ENCODE measurements at regions of chr19 and their contacts with region 1.

Region 1: DNA sequence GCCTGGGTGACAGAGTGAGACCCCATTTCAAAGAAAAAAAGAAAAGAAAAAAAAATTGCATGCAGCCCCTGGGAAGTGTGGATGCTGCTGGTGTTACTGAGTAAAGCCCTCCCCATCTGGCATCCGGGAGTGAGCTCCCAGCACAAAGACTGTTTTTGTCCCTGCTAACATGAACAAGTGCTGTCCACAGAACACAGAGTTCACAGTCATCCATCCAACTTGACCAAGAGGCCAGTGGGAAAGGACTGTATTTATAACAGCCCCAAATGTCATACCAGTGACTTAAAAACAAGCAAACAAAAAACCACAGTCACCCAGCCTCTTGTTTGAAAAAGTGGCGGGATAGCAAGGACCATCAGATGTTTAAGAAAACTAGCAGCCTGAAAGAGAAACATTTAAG is 10.8 kb downstream of the FBXO17 start:
- DNase-seq: no peak
- H3K4me3 ChIP-seq: no peak overlapping the region
- H3K27ac ChIP-seq: no peak overlapping the region
- H3K4me1 ChIP-seq: no peaks in the 10 kb centered on the region
- H3K27me3 ChIP-seq: no peaks in the 10 kb centered on the region
- CTCF ChIP-seq: no peak

Region 2: DNA sequence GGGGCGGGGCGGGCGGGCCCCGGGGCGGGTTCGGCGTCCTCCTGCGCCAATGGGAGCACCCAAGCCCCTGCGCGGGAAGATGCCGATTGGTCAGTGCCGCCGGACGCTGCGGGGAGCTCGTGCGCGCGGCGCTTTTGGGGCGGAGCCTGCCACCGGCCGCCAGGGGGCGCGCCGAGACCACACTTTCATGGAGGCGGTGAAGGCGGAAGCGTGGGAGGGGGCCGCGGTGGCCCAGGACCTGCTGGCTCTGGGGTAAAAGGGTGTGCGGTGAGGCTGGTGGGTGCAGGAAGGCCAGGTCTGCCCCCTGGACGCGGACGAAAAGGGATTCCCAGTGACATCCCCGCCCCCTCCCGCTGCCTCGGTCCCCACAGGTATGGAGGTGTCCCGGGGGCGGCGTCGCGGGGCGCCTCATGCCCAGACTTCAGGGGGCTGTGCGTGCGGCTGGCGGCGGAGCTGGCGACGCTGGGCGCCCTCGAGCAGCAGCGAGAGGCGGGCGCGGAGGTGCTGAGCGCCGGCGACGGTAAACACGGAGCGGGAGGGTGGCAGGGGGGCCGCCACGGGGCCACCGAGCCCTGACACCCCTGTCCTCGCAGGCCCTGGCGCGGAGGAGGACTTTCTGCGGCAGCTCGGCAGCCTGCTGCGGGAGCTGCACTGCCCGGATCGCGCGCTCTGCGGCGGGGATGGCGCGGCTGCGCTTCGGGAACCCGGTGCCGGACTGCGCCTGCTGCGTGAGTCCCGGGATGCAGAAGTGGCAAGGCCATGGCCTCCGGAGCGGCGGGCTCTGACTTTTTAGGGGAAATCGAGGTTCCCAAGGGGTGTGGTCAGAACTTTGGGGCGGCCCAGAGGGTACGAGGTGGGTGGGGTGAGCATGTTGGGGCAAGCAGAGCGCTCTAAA is 561.5 kb before region 1 on chr19 and contains the start of gene FAM98C:
- CTCF ChIA-PET with region 1: interaction called, 18 read pairs
- POLR2A ChIA-PET with region 1: no interaction called
- intact Hi-C with region 1: no loop called
- DNase-seq: peak; percentile 90 to 97
- H3K4me3 ChIP-seq: peak within 1 kb of the TSS; percentile 94
- H3K27ac ChIP-seq: no peak within 1 kb of the TSS
- H3K4me1 ChIP-seq: peaks cover 8% of the 10 kb centered on the region; the same call in 1 of the 2 replicates
- H3K27me3 ChIP-seq: no peaks in the 10 kb centered on the region
- CTCF ChIP-seq: peak; percentile 94
- total RNA-seq, gene FAM98C: 15.8 and 19.5 TPM in 2 replicates

Region 3: GRCh38 chr19:39052243-39052746 is 87.6 kb after region 1 on chr19:
- CTCF ChIA-PET with region 1: no interaction called
- POLR2A ChIA-PET with region 1: no interaction called
- intact Hi-C with region 1: loop called (anchors 1 kb)
- DNase-seq: peak; percentile 45 to 72
- H3K4me3 ChIP-seq: no peak overlapping the region
- H3K27ac ChIP-seq: no peak overlapping the region
- H3K4me1 ChIP-seq: peaks cover under 1% of the 10 kb centered on the region; the same call in 1 of the 2 replicates
- H3K27me3 ChIP-seq: no peaks in the 10 kb centered on the region
- CTCF ChIP-seq: peak; percentile 96

Region 4: GRCh38 chr19:39125554-39126311 is 161.0 kb after region 1 on chr19 and contains the start of gene PAK4:
- CTCF ChIA-PET with region 1: no interaction called
- POLR2A ChIA-PET with region 1: no interaction called
- intact Hi-C with region 1: loop called (anchors 1 kb)
- DNase-seq: peak; percentile 92 to 97
- H3K4me3 ChIP-seq: peak within 1 kb of the TSS; percentile 80
- H3K27ac ChIP-seq: peak within 1 kb of the TSS; percentile 27; the same call in 1 of the 2 replicates
- H3K4me1 ChIP-seq: peaks cover 9% of the 10 kb centered on the region
- H3K27me3 ChIP-seq: no peaks in the 10 kb centered on the region
- CTCF ChIP-seq: no peak
- total RNA-seq, gene PAK4: 77.8 and 90.2 TPM in 2 replicates

Region 5: DNA sequence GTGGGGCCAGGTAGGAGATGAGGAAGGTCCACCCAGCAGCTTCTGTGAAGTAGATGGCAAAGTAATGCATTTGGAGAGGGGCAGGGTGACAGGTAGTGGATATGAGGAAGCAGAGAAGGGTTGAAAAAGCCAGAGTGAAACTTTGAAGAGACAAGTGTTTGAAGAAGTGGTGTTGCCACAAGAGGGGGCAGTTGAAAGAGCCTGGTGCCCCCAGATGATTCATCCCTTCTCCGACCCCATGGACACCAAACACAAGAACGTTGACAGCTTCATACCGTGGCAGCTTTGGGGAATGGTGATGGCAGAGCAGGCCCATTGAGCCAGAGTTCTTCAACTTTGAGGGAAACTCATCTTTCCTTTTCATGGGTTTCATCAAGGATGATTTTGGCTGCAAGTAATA is 260.2 kb after region 1 on chr19:
- CTCF ChIA-PET with region 1: no interaction called
- POLR2A ChIA-PET with region 1: no interaction called
- intact Hi-C with region 1: no loop called
- DNase-seq: no peak
- H3K4me3 ChIP-seq: no peak overlapping the region
- H3K27ac ChIP-seq: no peak overlapping the region
- H3K4me1 ChIP-seq: no peaks in the 10 kb centered on the region
- H3K27me3 ChIP-seq: no peaks in the 10 kb centered on the region
- CTCF ChIP-seq: no peak

Region 6: DNA sequence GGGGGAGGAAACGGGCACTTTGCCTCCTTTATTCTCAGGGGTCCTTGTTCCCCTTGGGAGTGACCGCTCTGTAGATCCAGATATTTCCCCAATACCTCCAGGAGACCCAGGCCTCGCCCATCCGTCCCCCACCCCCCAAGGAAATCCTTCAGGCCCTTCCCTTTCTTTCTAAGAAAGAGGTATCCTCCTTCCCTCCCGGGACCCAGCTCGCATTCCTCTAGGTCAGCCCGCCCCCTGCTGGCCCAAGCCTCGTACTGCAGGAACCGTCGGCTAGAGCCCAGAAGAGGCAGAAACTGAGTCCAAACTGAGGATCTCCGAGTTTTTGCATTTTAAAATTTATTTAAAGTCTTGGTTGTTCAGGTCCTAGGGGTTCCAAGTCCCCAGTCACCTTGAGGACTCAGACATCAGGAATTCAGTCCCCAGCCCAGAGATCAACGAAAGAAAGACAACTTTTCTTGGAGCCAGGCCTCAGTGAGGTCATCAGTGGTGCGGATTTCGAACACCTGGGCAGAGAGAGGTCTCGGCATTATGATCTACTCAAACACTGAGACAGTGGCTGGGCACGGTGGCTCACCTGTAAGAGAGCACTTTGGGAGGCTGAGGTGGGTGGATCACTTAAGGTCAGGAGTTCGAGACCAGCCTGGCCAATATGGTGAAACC is 363.4 kb after region 1 on chr19:
- CTCF ChIA-PET with region 1: no interaction called
- POLR2A ChIA-PET with region 1: no interaction called
- intact Hi-C with region 1: loop called (anchors 5 kb)
- DNase-seq: peak; percentile 38 to 81
- H3K4me3 ChIP-seq: no peak overlapping the region
- H3K27ac ChIP-seq: no peak overlapping the region
- H3K4me1 ChIP-seq: no peaks in the 10 kb centered on the region
- H3K27me3 ChIP-seq: no peaks in the 10 kb centered on the region
- CTCF ChIP-seq: peak; percentile 97

Measured in PC-9 (cell line).